Pancreas (tissue), 10 donors: ENCODE measurements at regions of chr3 and their contacts with region 1.

Region 1: DNA sequence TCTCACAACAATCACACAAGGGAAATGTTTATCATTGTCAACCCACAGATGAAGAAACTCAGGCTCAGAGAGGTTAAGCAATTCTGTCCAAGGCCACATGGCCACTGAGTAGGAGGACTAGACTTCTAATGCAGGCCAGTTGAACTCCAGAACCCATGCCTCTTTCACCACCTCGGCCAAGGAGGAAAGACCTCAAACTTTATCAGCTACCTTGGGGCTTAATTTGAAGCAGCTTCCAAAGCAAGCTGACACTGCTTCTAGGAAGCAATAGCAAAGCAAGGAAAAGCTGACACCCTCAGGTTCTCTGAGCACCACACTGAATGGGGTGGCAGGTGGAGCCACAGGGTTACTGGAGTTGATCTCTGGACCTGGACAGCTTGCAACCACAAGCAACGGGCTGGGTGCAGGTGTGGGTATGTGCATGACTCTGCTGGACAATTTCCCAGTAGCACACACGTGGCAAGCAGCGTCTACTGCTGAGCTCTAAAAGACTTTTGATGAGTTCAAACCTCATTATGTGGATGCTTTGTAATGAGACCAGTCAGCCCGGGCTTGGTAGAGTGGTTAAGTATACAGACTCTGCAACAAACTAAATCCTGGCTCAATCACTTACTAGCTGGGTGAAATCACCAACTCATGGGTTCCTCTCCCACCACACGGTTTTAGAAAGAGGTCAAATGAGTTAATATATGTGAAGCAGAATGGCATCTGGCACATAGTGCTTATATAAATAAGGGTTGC is 23.1 kb downstream of the CCNL1 start:
- DNase-seq: peak in 5 of 6 donors; percentile 65 to 79 (median 69)
- ATAC-seq: peak; percentile 50 to 65 (median 60)
- H3K4me3 ChIP-seq: no peak overlapping the region
- H3K27ac ChIP-seq: peak overlapping the region; percentile 42 to 80 (median 56)
- H3K4me1 ChIP-seq: peaks cover 39 to 46% (median 46%) of the 10 kb centered on the region in 3 donors
- H3K27me3 ChIP-seq: no peaks in the 10 kb centered on the region
- CTCF ChIP-seq: no peak

Region 2: GRCh38 chr3:156816800-156817645 is 319.8 kb before region 1 on chr3:
- intact Hi-C with region 1: loop called in 1 of 3 experiments (anchors 5 kb)
- DNase-seq: peak; percentile 83 to 92 (median 89)
- ATAC-seq: peak; percentile 85 to 91 (median 88)
- H3K4me3 ChIP-seq: peak overlapping the region; percentile 40 to 75 (median 52)
- H3K27ac ChIP-seq: peak overlapping the region; percentile 91 to 96 (median 94)
- H3K4me1 ChIP-seq: peaks cover 22 to 37% (median 33%) of the 10 kb centered on the region in 3 donors
- H3K27me3 ChIP-seq: no peaks in the 10 kb centered on the region
- CTCF ChIP-seq: no peak

Region 3: DNA sequence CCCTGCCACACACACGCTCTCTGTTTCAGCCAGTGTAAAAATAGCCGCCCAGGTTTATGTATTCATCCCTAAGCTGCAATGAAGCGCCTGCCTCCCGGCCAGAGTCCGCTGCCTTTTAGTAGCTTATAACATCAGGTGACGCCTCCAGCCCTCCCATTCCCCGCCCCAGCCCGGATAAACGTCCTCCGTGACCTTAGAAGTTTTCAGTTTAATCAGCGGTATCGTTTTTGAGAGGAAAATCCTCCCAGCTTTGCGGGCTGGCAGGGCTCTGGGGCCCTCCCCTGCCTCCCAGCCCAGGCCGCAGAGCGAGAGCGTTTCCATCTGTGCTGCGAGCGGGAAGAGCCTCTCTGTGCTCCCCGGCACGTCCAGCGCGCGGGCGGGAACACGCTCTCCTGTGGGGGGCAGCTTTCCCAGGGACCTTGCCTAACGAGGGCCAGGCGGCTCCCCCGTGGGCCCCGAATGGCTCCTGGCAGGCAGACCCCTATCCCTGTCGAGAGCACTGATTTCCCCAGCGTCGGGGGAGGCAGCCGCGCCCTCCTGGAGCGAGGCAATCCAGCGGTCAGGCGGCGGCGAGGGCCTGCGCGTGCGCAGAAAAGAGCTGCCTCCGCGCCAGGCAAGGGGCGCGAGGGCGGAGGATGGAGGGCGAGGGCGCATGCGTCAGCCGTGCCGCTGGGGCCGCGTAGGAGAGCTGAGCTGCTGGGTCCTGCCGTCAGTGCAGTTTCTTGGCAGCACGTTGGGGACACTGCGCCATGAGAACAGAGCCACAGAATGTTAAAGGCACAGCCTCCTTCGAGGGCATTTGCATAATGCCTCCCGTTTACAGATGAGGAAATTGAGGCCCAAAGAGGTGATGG is 48.0 kb before region 1 on chr3:
- intact Hi-C with region 1: loop called in 2 of 3 experiments (anchors 5 kb)
- DNase-seq: peak; percentile 94 to 99 (median 97)
- ATAC-seq: peak; percentile 87 to 91 (median 90)
- H3K4me3 ChIP-seq: peak overlapping the region; percentile 44 to 62 (median 53)
- H3K27ac ChIP-seq: peak overlapping the region; percentile 98 to 100 (median 98)
- H3K4me1 ChIP-seq: peaks cover 27 to 38% (median 33%) of the 10 kb centered on the region in 3 donors
- H3K27me3 ChIP-seq: no peaks in the 10 kb centered on the region
- CTCF ChIP-seq: no peak

Region 4: GRCh38 chr3:157310329-157311052 is 173.7 kb after region 1 on chr3:
- intact Hi-C with region 1: no loop called
- DNase-seq: no peak
- ATAC-seq: no peak
- H3K4me3 ChIP-seq: no peak overlapping the region
- H3K27ac ChIP-seq: no peak overlapping the region
- H3K4me1 ChIP-seq: peaks cover 0 to 4% (median 0%) of the 10 kb centered on the region in 3 donors
- H3K27me3 ChIP-seq: no peaks in the 10 kb centered on the region
- CTCF ChIP-seq: no peak